Activated CD4-positive, alpha-beta T cell treated with anti-CD3 and anti-CD28 coated beads, Interleukin-2, amount 10 ng/mL, durations not matched to agents 24 days and 14 days (primary cell): ENCODE measurements at regions of chr1 and their contacts with region 1.

Region 1: DNA sequence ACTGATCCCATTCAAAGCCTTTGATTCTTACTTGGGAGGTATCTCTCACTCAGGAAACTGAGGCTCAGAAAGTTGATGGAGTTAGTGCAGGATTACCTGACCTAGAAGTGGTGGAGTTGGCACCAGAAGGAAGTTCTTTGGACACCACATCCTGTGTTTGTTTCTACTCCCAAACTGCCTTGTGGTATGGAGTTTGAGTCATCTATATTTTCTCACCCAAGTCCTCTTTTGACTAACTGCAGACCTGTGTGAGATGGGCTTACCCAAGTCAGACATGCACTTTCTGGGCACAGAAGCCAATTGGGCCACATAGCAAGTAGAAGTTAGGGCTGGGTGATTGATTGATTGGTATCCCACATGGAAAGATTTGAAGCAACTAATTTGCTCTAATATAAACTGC is 36.1 kb downstream of the FGGY start:
- DNase-seq: peak; percentile 76
- H3K4me3 Mint-ChIP-seq: peak overlapping the region; percentile 35
- H3K27ac Mint-ChIP-seq: peak overlapping the region; percentile 80
- H3K4me1 Mint-ChIP-seq: peaks cover 30% of the 10 kb centered on the region
- H3K27me3 Mint-ChIP-seq: no peaks in the 10 kb centered on the region

Region 2: DNA sequence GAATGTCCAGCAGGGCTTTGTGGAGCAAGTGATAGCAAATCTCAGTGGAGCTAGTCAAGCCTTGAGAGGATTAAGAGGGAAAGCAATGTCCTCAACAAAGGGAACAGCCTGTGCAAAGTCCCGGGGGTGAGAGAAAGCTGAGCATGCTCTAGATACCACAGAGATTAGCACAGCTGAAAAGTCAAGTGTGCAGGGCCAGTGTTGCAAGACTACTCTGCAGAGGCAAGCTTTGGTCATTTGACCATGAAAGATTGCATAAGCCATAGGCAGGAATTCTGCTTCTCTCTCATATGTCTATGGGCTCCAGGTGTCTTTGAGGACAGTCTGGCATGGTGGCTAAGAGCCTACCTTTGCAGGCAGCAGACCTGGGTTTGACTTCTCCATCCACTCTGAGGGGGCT is 368.1 kb before region 1 on chr1:
- intact Hi-C with region 1: no loop called
- DNase-seq: no peak
- H3K4me3 Mint-ChIP-seq: no peak overlapping the region
- H3K27ac Mint-ChIP-seq: no peak overlapping the region
- H3K4me1 Mint-ChIP-seq: peaks cover 32% of the 10 kb centered on the region
- H3K27me3 Mint-ChIP-seq: peaks cover 5% of the 10 kb centered on the region

Region 3: GRCh38 chr1:59046730-59047157 is 286.2 kb before region 1 on chr1:
- intact Hi-C with region 1: loop called (anchors 2 kb)
- DNase-seq: peak; percentile 89
- H3K4me3 Mint-ChIP-seq: peak overlapping the region; percentile 76
- H3K27ac Mint-ChIP-seq: peak overlapping the region; percentile 96
- H3K4me1 Mint-ChIP-seq: peaks cover 60% of the 10 kb centered on the region
- H3K27me3 Mint-ChIP-seq: no peaks in the 10 kb centered on the region

Region 4: DNA sequence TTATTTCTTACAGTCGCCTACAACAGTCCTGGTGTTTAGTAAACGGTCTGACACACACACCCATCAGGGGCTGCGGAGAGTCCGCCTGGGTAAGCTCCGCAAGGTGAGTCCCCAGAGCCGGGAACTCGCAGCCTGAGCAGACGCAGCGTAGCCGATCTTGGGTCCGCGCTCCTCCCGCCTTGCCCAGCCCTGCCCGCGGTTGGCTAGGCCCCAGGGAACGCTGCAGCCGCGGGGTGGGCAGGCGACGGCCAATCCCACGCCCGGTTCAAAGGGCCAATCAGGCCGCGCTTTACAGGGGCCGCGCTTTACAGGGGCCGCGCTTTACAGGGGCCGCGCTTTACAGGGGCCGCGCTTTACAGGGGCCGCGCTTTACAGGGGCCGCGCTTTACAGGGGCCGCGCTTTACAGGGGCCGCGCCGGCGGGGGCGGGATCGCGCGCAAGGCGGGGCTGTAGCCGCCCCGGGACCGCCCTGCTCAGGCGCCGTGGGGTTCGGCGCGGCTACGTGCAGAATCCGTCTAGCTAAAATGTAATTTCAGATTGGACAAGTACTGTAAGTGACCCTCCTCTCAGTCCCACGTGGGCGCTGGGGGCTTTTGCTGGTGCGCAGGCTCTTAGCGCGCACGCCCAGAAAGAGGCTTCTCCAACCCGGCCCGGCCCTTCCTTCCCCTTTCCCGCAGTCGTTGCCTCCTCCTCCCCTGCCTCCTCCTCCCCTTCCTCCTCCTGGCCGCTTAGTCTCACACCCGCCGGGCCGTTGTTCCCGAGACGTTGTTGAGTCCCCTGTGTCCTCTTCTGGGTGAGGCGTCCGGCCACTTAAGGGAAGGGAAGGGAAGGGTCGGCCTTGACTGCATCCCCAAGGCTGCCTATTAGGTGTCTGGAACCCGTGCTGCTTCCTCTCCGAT is 36.4 kb before region 1 on chr1 and contains the start of gene FGGY:
- intact Hi-C with region 1: loop called (anchors 1 kb)
- DNase-seq: peak; percentile 96
- H3K4me3 Mint-ChIP-seq: peak within 1 kb of the TSS; percentile 85
- H3K27ac Mint-ChIP-seq: peak within 1 kb of the TSS; percentile 91
- H3K4me1 Mint-ChIP-seq: peaks cover 36% of the 10 kb centered on the region
- H3K27me3 Mint-ChIP-seq: no peaks in the 10 kb centered on the region
- total RNA-seq, gene FGGY: 6.2 and 8.1 TPM in 2 replicates

Region 5: GRCh38 chr1:59354709-59355337 is 21.8 kb after region 1 on chr1:
- intact Hi-C with region 1: loop called (anchors 1 kb)
- DNase-seq: no peak
- H3K4me3 Mint-ChIP-seq: no peak overlapping the region
- H3K27ac Mint-ChIP-seq: peak overlapping the region; percentile 91
- H3K4me1 Mint-ChIP-seq: peaks cover 14% of the 10 kb centered on the region
- H3K27me3 Mint-ChIP-seq: no peaks in the 10 kb centered on the region

Region 6: GRCh38 chr1:59477286-59477685 is 144.3 kb after region 1 on chr1:
- intact Hi-C with region 1: loop called (anchors 5 kb)
- DNase-seq: peak; percentile 79
- H3K4me3 Mint-ChIP-seq: peak overlapping the region; percentile 32
- H3K27ac Mint-ChIP-seq: peak overlapping the region; percentile 75
- H3K4me1 Mint-ChIP-seq: peaks cover 19% of the 10 kb centered on the region
- H3K27me3 Mint-ChIP-seq: no peaks in the 10 kb centered on the region

Region 7: DNA sequence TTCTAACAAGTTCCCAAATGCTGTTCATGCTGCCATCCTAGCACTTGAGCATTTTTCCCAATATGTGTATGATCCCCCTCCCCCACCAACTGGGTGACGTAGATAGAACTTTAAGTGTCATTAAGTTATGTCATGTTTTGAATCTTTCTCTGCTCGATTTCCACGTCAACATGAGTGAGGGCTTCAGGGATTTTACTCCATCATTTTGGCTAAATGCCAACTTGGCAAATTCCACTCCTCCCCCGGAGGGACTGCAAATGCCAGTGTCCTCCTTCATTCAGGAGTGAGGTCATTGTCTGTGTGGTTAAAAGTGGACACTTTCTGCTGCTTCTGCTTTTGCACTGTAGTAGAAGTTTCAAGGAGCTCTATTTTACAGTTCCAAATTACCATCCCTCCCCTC is 165.7 kb after region 1 on chr1:
- intact Hi-C with region 1: no loop called
- DNase-seq: no peak
- H3K4me3 Mint-ChIP-seq: no peak overlapping the region
- H3K27ac Mint-ChIP-seq: no peak overlapping the region
- H3K4me1 Mint-ChIP-seq: peaks cover 6% of the 10 kb centered on the region
- H3K27me3 Mint-ChIP-seq: no peaks in the 10 kb centered on the region